Activated CD4-positive, alpha-beta T cell treated with anti-CD3 and anti-CD28 coated beads for 36 hours (primary cell): ENCODE measurements at regions of chr14 and their contacts with region 1.

Region 1: GRCh38 chr14:70887207-70887681 is 20.0 kb upstream of the PCNX1 start:
- DNase-seq: no peak
- ATAC-seq: peak; percentile 26
- H3K4me3 Mint-ChIP-seq: peak overlapping the region; percentile 55
- H3K27ac Mint-ChIP-seq: peak overlapping the region; percentile 96
- H3K4me1 Mint-ChIP-seq: peaks cover 80% of the 10 kb centered on the region
- H3K27me3 Mint-ChIP-seq: no peaks in the 10 kb centered on the region

Region 2: GRCh38 chr14:70665191-70665916 is 221.9 kb before region 1 on chr14:
- CTCF ChIA-PET with region 1: no interaction called
- POLR2A ChIA-PET with region 1: no interaction called
- intact Hi-C with region 1: loop called in 1 of 2 experiments (anchors 5 kb)
- DNase-seq: no peak
- ATAC-seq: no peak
- H3K4me3 Mint-ChIP-seq: no peak overlapping the region
- H3K27ac Mint-ChIP-seq: peak overlapping the region; percentile 67
- H3K4me1 Mint-ChIP-seq: peaks cover 51% of the 10 kb centered on the region
- H3K27me3 Mint-ChIP-seq: no peaks in the 10 kb centered on the region

Region 3: GRCh38 chr14:70780396-70781075 is 106.7 kb before region 1 on chr14:
- CTCF ChIA-PET with region 1: no interaction called
- POLR2A ChIA-PET with region 1: no interaction called
- intact Hi-C with region 1: no loop called
- DNase-seq: no peak
- ATAC-seq: no peak
- H3K4me3 Mint-ChIP-seq: no peak overlapping the region
- H3K27ac Mint-ChIP-seq: no peak overlapping the region
- H3K4me1 Mint-ChIP-seq: peaks cover 17% of the 10 kb centered on the region
- H3K27me3 Mint-ChIP-seq: no peaks in the 10 kb centered on the region

Region 4: GRCh38 chr14:70821584-70822529 is 65.4 kb before region 1 on chr14:
- CTCF ChIA-PET with region 1: interaction called, 19 read pairs
- POLR2A ChIA-PET with region 1: no interaction called
- intact Hi-C with region 1: loop called (anchors 1 kb)
- DNase-seq: peak; percentile 78
- ATAC-seq: peak; percentile 43
- H3K4me3 Mint-ChIP-seq: peak overlapping the region; percentile 73
- H3K27ac Mint-ChIP-seq: peak overlapping the region; percentile 13
- H3K4me1 Mint-ChIP-seq: peaks cover 16% of the 10 kb centered on the region
- H3K27me3 Mint-ChIP-seq: peaks cover 28% of the 10 kb centered on the region

Region 5: GRCh38 chr14:70901269-70901668 is 14.0 kb after region 1 on chr14:
- CTCF ChIA-PET with region 1: interaction called, 173 read pairs
- POLR2A ChIA-PET with region 1: interaction called, 44 read pairs
- intact Hi-C with region 1: loop called (anchors 1 kb)
- DNase-seq: no peak
- ATAC-seq: no peak
- H3K4me3 Mint-ChIP-seq: no peak overlapping the region
- H3K27ac Mint-ChIP-seq: peak overlapping the region; percentile 48
- H3K4me1 Mint-ChIP-seq: peaks cover 62% of the 10 kb centered on the region
- H3K27me3 Mint-ChIP-seq: peaks cover 5% of the 10 kb centered on the region

Region 6: GRCh38 chr14:70934502-70935134 is 47.4 kb after region 1 on chr14:
- CTCF ChIA-PET with region 1: interaction called, 3 read pairs
- POLR2A ChIA-PET with region 1: interaction called, 4 read pairs
- intact Hi-C with region 1: loop called in 1 of 2 experiments (anchors 1 kb)
- DNase-seq: peak; percentile 36
- ATAC-seq: peak; percentile 87
- H3K4me3 Mint-ChIP-seq: peak overlapping the region; percentile 43
- H3K27ac Mint-ChIP-seq: peak overlapping the region; percentile 92
- H3K4me1 Mint-ChIP-seq: peaks cover 76% of the 10 kb centered on the region
- H3K27me3 Mint-ChIP-seq: no peaks in the 10 kb centered on the region

Region 7: GRCh38 chr14:71331403-71331802 is 444.2 kb after region 1 on chr14:
- CTCF ChIA-PET with region 1: no interaction called
- POLR2A ChIA-PET with region 1: no interaction called
- intact Hi-C with region 1: loop called in 1 of 2 experiments (anchors 5 kb)
- DNase-seq: no peak
- ATAC-seq: peak; percentile 17
- H3K4me3 Mint-ChIP-seq: no peak overlapping the region
- H3K27ac Mint-ChIP-seq: peak overlapping the region; percentile 69
- H3K4me1 Mint-ChIP-seq: peaks cover 70% of the 10 kb centered on the region
- H3K27me3 Mint-ChIP-seq: no peaks in the 10 kb centered on the region